Endothelial cell of umbilical vein (primary cell): ENCODE measurements at regions of chr6 and their contacts with region 1.

Region 1: GRCh38 chr6:28838634-28839442 is 84.9 kb downstream of the TRIM27 start:
- DNase-seq: peak; percentile 88
- H3K4me3 ChIP-seq: peak overlapping the region; percentile 88 to 97 (median 95)
- H3K27ac ChIP-seq: peak overlapping the region; percentile 21
- H3K4me1 ChIP-seq: peaks cover 6% of the 10 kb centered on the region
- H3K27me3 ChIP-seq: peaks cover 1 to 13% of the 10 kb centered on the region in 2 experiments
- CTCF ChIP-seq: peak; percentile 77 to 87
- POLR2A ChIP-seq: no peak

Region 2: GRCh38 chr6:28807682-28808280 is 31.1 kb before region 1 on chr6:
- CTCF ChIA-PET with region 1: interaction called, 11 read pairs
- POLR2A ChIA-PET with region 1: no interaction called
- dilution Hi-C with region 1: no loop called
- intact Hi-C with region 1: loop called (anchors 2 kb)
- DNase-seq: peak; percentile 53
- H3K4me3 ChIP-seq: peak overlapping the region in 2 of 3 experiments; percentile 30 to 36
- H3K27ac ChIP-seq: no peak overlapping the region
- H3K4me1 ChIP-seq: peaks cover 4% of the 10 kb centered on the region
- H3K27me3 ChIP-seq: peaks cover 39 to 50% of the 10 kb centered on the region in 2 experiments
- CTCF ChIP-seq: no peak
- POLR2A ChIP-seq: no peak

Region 3: DNA sequence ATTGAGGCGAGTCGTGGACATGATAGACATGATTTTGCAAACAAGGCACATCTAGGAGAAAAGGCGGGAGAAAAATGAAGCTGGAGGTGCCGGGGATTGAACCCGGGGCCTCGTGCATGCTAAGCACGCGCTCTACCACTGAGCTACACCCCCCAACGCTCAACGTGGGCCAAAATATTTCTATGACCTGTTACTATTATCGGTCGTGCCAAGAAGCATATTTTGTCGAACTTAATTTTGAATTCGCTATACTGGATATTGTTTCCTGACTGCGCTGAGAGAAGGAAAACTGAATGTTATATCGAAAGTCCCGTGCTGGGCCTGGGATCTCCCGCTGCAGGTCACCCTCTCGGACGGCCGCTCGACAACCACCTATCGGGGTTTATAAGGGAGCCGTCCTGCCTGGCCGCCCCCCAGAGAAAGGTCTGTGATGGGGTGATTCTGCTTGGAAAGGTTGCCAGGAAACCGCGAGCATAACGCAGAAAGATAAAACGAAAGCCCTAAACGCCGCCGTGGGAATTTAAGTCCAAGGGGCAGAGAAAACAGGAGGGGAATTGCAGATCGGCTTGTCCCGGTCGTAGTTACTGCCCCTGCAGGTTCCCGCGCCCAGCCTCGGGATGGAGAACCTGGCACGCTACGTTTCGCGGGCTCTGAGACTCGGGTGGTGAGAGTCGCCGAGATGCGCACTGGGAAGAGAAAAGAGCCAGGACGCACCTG is 24.9 kb after region 1 on chr6:
- CTCF ChIA-PET with region 1: interaction called, 39 read pairs
- POLR2A ChIA-PET with region 1: interaction called, 3 read pairs
- dilution Hi-C with region 1: no loop called
- intact Hi-C with region 1: loop called (anchors 1 kb)
- DNase-seq: peak; percentile 91
- H3K4me3 ChIP-seq: peak overlapping the region; percentile 64 to 91 (median 83)
- H3K27ac ChIP-seq: peak overlapping the region; percentile 9
- H3K4me1 ChIP-seq: peaks cover 16% of the 10 kb centered on the region
- H3K27me3 ChIP-seq: peaks cover 5% of the 10 kb centered on the region in 2 experiments
- CTCF ChIP-seq: no peak
- POLR2A ChIP-seq: no peak

Region 4: DNA sequence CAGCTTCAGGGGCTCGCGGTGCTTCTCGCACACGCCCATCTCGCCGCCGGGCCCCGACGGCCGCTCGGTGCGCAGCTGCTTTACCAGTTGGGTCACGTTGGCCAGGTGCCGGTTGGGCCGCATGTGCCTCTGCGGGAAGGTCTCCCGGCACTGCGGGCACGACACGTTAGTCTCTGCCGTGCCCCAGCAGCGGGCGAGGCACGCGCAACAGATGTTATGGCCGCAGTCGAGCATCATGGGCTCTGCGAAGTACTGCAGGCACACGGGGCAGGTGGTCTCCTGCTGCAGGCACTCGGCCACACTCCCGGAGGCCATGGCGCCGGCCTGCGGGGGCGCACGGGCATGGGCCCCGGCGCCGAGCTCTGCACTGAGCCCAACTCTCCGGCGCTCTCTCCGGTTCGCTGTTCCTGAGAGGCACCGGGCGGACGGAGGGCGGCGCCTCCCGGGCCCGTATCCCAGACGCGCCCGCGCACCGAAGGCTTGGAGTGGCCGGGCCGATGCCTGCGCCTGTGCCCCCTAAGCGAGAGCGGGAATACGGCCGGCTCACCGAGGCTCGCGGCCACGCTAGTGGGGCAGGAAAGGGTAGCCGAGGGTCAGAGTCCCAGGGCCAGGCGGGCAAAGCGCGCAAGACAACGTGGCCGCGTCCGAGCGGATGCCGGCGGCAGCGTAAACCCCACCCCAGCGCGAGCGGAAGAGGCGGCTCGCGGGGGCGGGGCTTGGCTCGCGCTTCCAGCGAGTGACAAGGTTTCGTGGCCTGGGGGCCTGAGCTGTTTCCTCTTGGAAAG is 84.7 kb after region 1 on chr6 and contains the start of gene TRIM27:
- CTCF ChIA-PET with region 1: interaction called, 19 read pairs
- POLR2A ChIA-PET with region 1: no interaction called
- dilution Hi-C with region 1: no loop called
- intact Hi-C with region 1: no loop called
- DNase-seq: peak; percentile 85
- H3K4me3 ChIP-seq: peak within 1 kb of the TSS; percentile 55 to 90 (median 63)
- H3K27ac ChIP-seq: peak within 1 kb of the TSS; percentile 77
- H3K4me1 ChIP-seq: peaks cover 18% of the 10 kb centered on the region
- H3K27me3 ChIP-seq: no peaks in the 10 kb centered on the region
- CTCF ChIP-seq: no peak
- POLR2A ChIP-seq: peak; percentile 95
- total RNA-seq, gene TRIM27: 67.5 and 69.2 TPM in 2 replicates

Region 5: GRCh38 chr6:28988536-28989311 is 149.9 kb after region 1 on chr6:
- CTCF ChIA-PET with region 1: interaction called, 56 read pairs
- POLR2A ChIA-PET with region 1: no interaction called
- dilution Hi-C with region 1: no loop called
- intact Hi-C with region 1: loop called (anchors 1 kb)
- DNase-seq: peak; percentile 66
- H3K4me3 ChIP-seq: peak overlapping the region in 2 of 3 experiments; percentile 4 to 34
- H3K27ac ChIP-seq: no peak overlapping the region
- H3K4me1 ChIP-seq: no peaks in the 10 kb centered on the region
- H3K27me3 ChIP-seq: no peaks in the 10 kb centered on the region
- CTCF ChIP-seq: peak; percentile 73 to 79
- POLR2A ChIP-seq: no peak

Region 6: DNA sequence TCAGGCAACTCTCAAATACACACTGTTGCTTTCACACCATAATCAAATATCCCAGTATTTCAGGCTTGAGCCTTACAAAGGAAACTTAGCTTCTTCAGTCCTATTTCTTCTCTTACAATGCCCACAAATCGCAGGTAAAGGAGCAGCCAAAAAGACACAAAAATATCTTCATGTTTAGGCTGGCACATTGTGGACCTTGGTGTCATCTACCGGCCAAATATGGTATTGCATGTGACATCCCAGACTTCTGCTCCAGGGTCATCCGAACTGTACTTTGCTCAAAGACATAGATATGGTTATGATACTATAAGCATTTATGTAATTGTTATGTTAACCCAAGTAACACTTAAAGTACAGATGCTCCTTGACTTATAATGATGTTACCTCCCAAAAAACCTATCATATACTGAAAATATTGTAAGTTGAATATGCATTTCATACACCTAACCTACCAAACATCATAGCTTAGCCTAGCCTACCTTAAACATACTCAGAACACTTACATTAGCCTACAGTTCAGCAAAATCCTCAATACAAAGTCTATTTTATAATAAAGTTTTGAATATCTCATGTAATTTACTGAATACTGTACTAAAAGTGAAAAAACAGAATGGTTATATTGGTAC is 750.7 kb after region 1 on chr6:
- CTCF ChIA-PET with region 1: interaction called, 5 read pairs
- POLR2A ChIA-PET with region 1: no interaction called
- dilution Hi-C with region 1: no loop called
- intact Hi-C with region 1: loop called (anchors 5 kb)
- DNase-seq: peak; percentile 57
- H3K4me3 ChIP-seq: no peak overlapping the region
- H3K27ac ChIP-seq: no peak overlapping the region
- H3K4me1 ChIP-seq: no peaks in the 10 kb centered on the region
- H3K27me3 ChIP-seq: peaks cover 0 to 8% of the 10 kb centered on the region in 2 experiments
- CTCF ChIP-seq: peak; percentile 73 to 84
- POLR2A ChIP-seq: no peak